ENCODE measurements at regions of chr18 and their contacts with region 1.

Region 1: DNA sequence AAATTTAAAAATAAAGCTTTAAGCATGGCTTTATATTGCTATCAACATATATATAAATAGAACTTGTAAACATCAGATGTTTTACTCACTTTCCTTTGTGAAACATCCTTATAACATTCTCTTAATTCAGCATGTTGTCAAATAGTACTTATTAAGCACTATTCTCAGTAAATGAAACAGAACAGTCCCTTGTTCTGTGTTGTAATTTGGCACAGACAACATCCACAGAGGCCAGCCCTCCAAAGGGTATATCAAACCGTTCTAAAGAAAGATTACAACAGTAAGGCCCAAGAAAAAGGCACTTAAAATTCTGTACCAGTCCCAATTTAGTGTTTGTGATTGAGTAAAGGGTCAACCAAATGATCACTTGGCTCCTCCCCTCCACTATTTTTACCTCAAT is 46.0 kb downstream of the GAREM1 start:
- DNase-seq: no peak
- ATAC-seq: peak in 7 of 8 donors; percentile 55 to 88 (median 76)
- H3K4me3 ChIP-seq: no peak overlapping the region
- H3K27ac ChIP-seq: peak overlapping the region in 8 of 10 donors; percentile 23 to 59 (median 34)
- H3K4me1 ChIP-seq: peaks cover 0 to 90% (median 55%) of the 10 kb centered on the region in 9 donors
- H3K27me3 ChIP-seq: no peaks in the 10 kb centered on the region
- CTCF ChIP-seq: no peak

Region 2: DNA sequence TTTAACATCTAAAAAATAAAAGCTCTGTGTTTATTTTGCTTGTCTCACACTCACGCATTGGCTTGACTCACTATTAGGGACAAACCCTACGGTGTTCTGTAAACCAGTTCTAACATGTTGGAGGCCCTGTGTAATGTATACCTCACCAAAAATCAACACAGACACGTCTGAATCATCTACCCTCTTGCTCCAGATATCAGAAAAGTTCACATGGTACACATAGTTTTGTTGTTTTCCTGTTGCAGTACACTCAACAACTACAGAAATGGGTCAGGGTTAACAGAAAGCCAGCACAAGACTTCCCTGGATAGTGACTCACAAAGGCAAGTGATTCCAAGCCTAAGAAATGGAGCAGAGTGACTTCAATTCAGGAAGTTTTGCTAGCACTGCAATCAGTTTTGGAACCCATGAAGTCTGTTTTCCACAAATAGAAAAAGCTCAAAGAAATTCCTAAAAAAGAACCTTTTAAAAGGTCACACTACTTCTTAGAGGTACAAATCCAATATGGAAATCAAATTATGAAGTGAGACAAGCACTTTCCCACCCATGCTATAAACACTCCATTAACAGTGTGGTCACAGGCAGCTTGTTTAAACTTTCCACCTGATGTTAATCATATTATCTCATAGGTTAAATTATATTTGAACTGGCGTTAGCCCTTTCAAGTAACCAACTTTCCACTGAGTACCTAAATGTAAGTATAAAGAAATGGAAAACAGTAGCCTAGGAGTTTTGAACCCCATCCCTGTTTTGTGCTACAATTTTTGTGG is 41.5 kb before region 1 on chr18:
- intact Hi-C with region 1: loop called in 1 of 10 experiments (anchors 5 kb)
- DNase-seq: no peak
- ATAC-seq: peak; percentile 44 to 75 (median 68)
- H3K4me3 ChIP-seq: no peak overlapping the region
- H3K27ac ChIP-seq: peak overlapping the region in 6 of 10 donors; percentile 2 to 40 (median 16)
- H3K4me1 ChIP-seq: peaks cover 0 to 45% (median 37%) of the 10 kb centered on the region in 9 donors
- H3K27me3 ChIP-seq: no peaks in the 10 kb centered on the region
- CTCF ChIP-seq: no peak

Measured in heart right ventricle (tissue), 16 donors.